ENCODE measurements at regions of chr2 and their contacts with region 1.

Region 1: DNA sequence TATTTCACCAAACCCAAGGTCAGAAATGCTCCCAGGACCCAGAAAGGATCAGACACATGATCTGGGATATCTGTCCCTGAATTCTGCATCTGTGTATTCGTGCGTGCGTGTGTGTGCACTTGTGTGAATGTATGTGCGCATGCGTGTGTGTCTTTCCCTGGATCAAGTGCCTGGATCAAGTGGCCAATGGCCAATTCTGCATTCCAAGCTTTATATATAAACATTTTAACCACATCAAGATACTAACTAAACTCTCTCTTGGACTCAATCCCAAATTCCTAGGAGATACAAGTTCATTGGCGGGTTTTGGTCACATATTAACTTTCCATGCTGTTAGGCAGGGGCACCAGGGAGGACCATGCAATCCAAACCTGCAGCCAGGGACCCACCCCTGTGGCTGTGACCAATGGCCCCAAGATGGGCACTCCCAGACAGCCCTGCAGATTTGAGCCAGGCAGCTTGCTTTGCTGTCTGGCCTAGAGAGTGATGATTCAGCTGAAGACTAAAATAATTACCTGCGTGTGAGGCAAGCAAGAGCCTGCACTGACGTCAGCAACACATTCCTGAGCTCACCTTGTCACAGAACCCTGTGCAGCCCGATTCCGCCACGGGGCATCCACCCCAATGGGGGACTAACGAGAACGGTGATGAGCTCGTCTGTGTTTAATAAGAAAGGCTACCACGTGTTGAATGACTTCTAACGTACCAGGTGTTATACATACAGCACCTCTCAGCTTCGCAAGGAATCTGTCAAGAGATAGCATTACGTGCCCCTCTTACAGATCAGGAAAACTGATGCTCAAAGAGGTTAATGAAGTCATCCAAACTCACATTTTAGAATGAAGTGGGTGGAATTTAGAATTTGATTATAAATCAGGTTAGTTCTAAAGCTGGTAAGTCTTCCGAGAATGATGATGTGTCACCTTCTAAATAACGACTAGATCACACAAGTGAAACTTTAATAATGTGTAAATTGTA is 45.4 kb upstream of the ROCK2 start:
- DNase-seq: peak; percentile 87
- H3K4me3 Mint-ChIP-seq: peak overlapping the region; percentile 18
- H3K27ac Mint-ChIP-seq: peak overlapping the region; percentile 59
- H3K4me1 Mint-ChIP-seq: peaks cover 61% of the 10 kb centered on the region
- H3K27me3 Mint-ChIP-seq: no peaks in the 10 kb centered on the region
- CTCF ChIP-seq: no peak

Region 2: DNA sequence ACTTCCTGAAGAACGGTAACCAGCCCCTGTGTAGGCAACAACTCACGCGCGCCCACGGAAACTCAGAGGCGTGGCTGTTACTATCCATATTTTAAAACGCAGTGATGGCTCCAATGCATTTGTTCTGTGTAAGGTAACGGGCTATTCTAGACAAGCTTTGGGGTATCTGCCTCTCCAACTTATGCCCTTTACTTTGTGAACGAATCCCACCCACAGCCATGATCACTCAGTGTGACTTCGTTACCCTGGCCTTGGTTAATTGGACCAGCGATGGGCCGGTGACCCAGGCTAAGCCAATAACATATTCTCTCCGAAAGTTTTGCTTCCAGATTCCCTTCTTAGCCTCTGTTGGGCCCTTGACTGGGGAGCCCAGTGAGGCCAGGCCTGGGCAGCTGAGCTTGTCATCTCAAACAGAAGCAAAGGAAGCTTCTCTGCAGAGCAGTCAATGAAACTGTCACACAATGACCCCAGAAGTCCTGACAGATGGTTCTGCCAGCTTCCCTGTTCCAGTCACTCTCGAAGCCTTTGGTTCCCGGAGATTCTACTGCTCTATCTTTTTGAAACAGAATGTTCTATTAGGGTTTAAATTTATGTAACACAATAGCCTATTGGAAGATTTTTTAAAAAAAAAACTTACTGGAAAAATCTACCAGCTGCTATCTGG is 14.7 kb before region 1 on chr2:
- CTCF ChIA-PET with region 1: interaction called, 13 read pairs
- intact Hi-C with region 1: loop called (anchors 2 kb)
- DNase-seq: no peak
- H3K4me3 Mint-ChIP-seq: peak overlapping the region; percentile 69
- H3K27ac Mint-ChIP-seq: peak overlapping the region; percentile 67
- H3K4me1 Mint-ChIP-seq: peaks cover 48% of the 10 kb centered on the region
- H3K27me3 Mint-ChIP-seq: no peaks in the 10 kb centered on the region
- CTCF ChIP-seq: no peak

Region 3: DNA sequence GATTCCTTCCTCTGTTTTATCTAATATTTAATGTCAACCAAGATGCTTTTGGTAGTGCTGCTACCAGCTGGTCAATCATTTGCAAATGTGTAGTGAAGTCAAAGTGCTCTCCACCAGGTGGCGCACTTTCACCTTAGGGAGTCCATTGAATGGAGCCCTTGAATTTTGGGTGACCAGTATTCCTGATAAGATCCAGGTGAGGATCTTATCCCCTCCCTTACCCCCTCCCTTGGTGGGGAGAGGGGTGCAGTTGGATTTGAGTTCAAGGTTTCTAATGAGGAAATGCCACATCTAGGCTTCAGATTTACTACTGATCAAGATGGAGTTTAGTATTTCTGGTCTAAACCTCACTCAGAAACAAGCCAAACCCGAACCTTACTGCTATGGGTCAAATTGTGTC is 88.2 kb after region 1 on chr2:
- CTCF ChIA-PET with region 1: no interaction called
- intact Hi-C with region 1: no loop called
- DNase-seq: peak; percentile 88
- H3K4me3 Mint-ChIP-seq: no peak overlapping the region
- H3K27ac Mint-ChIP-seq: no peak overlapping the region
- H3K4me1 Mint-ChIP-seq: peaks cover 3% of the 10 kb centered on the region
- H3K27me3 Mint-ChIP-seq: peaks cover 34% of the 10 kb centered on the region
- CTCF ChIP-seq: peak; percentile 64

Measured in Calu3 (cell line).